ENCODE measurements at regions of chr19 and their contacts with region 1.

Region 1: GRCh38 chr19:37370880-37371661 is at the start of gene ZNF527:
- DNase-seq: peak; percentile 97
- H3K4me3 Mint-ChIP-seq: peak within 1 kb of the TSS; percentile 83
- H3K27ac Mint-ChIP-seq: peak within 1 kb of the TSS; percentile 83
- H3K4me1 Mint-ChIP-seq: peaks cover 11% of the 10 kb centered on the region
- H3K27me3 Mint-ChIP-seq: no peaks in the 10 kb centered on the region
- total RNA-seq, gene ZNF527: 4.3 to 5.0 TPM

Region 2: DNA sequence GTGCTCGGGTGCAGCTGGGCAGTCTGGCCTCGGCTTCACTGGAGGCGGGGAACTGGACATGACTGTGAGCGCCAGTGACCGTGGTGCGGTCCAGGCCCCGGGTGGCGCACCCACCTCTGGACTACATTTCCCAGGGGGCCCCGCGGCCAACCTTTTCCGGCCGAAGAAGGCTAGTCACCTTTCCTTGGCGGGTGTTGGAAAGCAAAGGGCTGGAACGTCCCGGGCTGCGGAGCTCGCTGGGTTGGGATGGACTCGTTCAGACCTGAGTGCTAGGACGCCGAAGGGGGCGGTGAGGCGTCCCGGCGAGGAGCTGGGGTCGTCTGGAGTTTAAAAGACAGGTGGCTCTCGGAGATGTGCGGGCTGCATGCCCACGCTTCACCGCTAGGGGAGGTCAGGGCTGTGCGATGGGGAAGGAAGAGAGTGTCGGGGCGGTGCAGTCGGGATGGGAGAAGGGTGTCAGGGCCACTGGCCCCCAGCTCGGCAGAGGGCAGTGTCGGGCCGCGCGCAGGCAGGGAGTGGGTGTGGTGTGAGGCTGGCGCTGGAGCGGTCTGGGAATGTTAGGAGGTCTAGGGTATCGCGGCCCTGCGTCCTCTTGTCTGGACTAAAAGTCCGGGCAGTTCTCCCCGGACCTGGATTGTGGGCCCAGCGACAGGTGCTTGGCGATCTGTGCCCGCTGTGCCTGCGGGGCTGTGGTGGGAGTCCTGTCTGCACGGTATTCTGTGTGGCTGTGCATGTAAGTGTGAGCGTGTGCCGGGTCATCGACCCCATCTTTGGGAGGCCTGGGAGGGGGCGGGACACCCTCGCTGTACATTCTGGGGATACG is 397.8 kb before region 1 on chr19:
- CTCF ChIA-PET with region 1: no interaction called
- intact Hi-C with region 1: loop called (anchors 2 kb)
- DNase-seq: peak; percentile 91
- H3K4me3 Mint-ChIP-seq: peak overlapping the region; percentile 92
- H3K27ac Mint-ChIP-seq: peak overlapping the region; percentile 95
- H3K4me1 Mint-ChIP-seq: peaks cover 11% of the 10 kb centered on the region
- H3K27me3 Mint-ChIP-seq: no peaks in the 10 kb centered on the region

Region 3: DNA sequence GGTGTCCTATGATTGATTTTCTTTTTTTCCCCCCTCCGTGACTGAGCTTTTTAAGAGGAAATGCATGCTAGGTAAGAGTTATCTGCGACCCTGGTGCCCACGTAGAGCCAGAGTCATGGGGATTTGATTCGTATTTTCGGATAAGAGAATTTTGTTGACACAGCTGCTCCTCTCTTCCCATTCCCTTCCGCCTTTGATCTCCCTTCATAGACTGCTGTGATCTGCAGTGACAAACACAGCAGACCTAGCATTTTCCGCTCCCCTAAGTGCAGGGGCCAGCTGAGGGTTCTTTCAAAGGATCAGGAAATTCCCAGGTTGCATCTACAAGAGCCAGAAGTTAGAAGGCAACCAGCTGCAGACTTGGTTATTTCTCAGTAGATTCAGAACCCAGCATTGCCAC is 384.5 kb before region 1 on chr19:
- CTCF ChIA-PET with region 1: no interaction called
- intact Hi-C with region 1: no loop called
- DNase-seq: no peak
- H3K4me3 Mint-ChIP-seq: no peak overlapping the region
- H3K27ac Mint-ChIP-seq: no peak overlapping the region
- H3K4me1 Mint-ChIP-seq: no peaks in the 10 kb centered on the region
- H3K27me3 Mint-ChIP-seq: no peaks in the 10 kb centered on the region

Region 4: GRCh38 chr19:37172368-37173366 is 198.4 kb before region 1 on chr19 and contains the start of gene ZNF585A:
- CTCF ChIA-PET with region 1: no interaction called
- intact Hi-C with region 1: loop called (anchors 1 kb)
- DNase-seq: peak; percentile 92
- H3K4me3 Mint-ChIP-seq: no peak within 1 kb of the TSS
- H3K27ac Mint-ChIP-seq: no peak within 1 kb of the TSS
- H3K4me1 Mint-ChIP-seq: no peaks in the 10 kb centered on the region
- H3K27me3 Mint-ChIP-seq: no peaks in the 10 kb centered on the region
- total RNA-seq, gene ZNF585A: 8.9 to 9.1 TPM

Region 5: DNA sequence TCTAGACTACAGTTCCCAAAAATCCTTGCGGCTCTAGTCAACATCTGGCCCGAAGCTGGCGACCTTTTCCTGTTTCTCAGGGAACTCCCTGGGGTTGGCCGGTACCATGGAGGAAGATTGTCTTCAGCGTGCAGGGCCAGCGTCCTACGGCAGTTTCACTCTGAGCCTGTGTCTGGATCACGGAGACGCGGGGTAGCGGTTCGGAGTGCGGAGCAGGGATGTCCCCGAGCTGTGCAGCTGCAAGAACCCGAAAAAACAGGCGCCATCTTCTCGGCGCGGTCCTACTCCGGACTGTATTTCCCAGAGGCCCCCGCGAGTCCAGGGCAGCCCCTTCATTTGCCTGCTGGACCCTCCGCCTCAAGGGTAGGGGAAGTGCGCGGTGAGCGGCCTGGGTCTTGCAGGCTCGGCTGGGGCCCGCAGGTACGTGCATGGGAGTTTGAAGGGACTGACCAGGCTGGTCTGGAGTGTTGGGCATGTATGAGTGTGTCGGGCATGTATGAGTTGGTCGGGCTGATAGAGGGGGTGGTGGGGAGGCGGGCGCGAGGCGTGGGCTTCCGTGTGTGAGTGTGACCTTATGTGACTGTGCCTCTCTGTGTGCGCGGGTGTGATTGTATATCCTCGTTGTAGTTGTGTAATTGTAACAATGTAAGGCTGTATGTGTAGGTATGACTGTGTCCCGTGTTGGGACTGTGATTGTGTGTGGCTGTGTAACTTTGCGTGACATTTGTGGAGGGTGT is 153.0 kb before region 1 on chr19 and contains the start of gene ZNF383:
- CTCF ChIA-PET with region 1: no interaction called
- intact Hi-C with region 1: loop called (anchors 2 kb)
- DNase-seq: peak; percentile 87
- H3K4me3 Mint-ChIP-seq: peak within 1 kb of the TSS; percentile 88
- H3K27ac Mint-ChIP-seq: peak within 1 kb of the TSS; percentile 92
- H3K4me1 Mint-ChIP-seq: peaks cover 16% of the 10 kb centered on the region
- H3K27me3 Mint-ChIP-seq: no peaks in the 10 kb centered on the region
- total RNA-seq, gene ZNF383: 8.4 to 9.1 TPM

Region 6: GRCh38 chr19:37309834-37310575 is 61.1 kb before region 1 on chr19:
- CTCF ChIA-PET with region 1: no interaction called
- intact Hi-C with region 1: no loop called
- DNase-seq: peak; percentile 48
- H3K4me3 Mint-ChIP-seq: no peak overlapping the region
- H3K27ac Mint-ChIP-seq: no peak overlapping the region
- H3K4me1 Mint-ChIP-seq: peaks cover 9% of the 10 kb centered on the region
- H3K27me3 Mint-ChIP-seq: peaks cover 14% of the 10 kb centered on the region

Region 7: DNA sequence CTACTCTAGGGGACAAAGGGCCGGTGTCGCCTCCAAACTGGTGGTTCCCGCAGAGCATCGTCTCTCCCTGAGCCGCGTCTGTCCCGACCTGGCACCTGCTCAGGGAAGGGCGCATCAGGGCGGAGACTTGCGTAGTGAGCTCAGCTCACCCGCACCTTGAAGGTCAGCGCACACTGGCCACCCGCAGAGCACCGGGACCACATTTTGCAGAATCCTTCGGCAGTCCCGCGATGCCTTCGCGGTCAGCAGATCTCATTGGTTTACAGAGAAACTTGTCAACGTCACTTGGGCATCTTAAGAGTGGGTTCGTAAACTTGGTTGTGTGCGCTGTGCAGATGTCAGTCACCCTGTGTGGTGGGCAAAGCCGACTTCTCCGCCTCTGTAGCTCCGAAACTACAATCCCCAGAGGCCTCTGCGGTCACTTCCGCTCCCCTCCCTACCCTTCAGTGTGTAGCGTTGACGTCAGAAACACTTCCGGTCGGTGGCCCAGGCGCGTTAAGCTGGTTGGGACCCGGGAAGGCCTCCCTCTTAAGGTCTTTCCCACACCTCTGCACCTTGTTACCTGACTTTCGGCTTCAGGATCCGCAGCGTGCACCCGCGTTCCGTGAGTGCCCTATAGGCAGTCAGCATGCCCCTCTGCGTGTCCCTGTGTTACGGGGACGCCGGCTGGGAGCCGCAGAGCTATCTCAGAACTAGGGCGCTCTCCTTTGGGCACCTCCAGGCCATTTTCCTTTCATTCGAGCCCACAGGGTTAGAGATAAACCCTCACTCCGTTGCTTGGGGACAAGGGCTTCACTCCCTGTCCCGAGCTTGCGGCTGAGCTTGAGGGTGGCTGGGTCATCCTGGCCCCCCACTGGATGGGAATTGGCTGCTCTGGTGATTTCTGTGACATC is 36.6 kb before region 1 on chr19:
- CTCF ChIA-PET with region 1: no interaction called
- intact Hi-C with region 1: loop called (anchors 2 kb)
- DNase-seq: peak; percentile 91
- H3K4me3 Mint-ChIP-seq: peak overlapping the region; percentile 85
- H3K27ac Mint-ChIP-seq: peak overlapping the region; percentile 77
- H3K4me1 Mint-ChIP-seq: peaks cover 27% of the 10 kb centered on the region
- H3K27me3 Mint-ChIP-seq: no peaks in the 10 kb centered on the region

Region 8: GRCh38 chr19:37506387-37507166 is 135.5 kb after region 1 on chr19 and contains the start of gene ZNF793:
- CTCF ChIA-PET with region 1: no interaction called
- intact Hi-C with region 1: loop called (anchors 1 kb)
- DNase-seq: peak; percentile 85
- H3K4me3 Mint-ChIP-seq: no peak within 1 kb of the TSS
- H3K27ac Mint-ChIP-seq: no peak within 1 kb of the TSS
- H3K4me1 Mint-ChIP-seq: no peaks in the 10 kb centered on the region
- H3K27me3 Mint-ChIP-seq: no peaks in the 10 kb centered on the region
- total RNA-seq, gene ZNF793: 3.8 to 3.9 TPM